ENCODE measurements at regions of chr12 and their contacts with region 1.

Region 1: GRCh38 chr12:77685112-77685511 is 145.6 kb upstream of the NAV3 start:
- DNase-seq: peak; percentile 80
- ATAC-seq: peak; percentile 92
- H3K4me3 ChIP-seq: no peak overlapping the region
- H3K27ac ChIP-seq: no peak overlapping the region
- H3K4me1 ChIP-seq: no peaks in the 10 kb centered on the region
- H3K27me3 ChIP-seq: no peaks in the 10 kb centered on the region; the same call in 1 of the 2 replicates
- CTCF ChIP-seq: peak; percentile 76

Region 2: DNA sequence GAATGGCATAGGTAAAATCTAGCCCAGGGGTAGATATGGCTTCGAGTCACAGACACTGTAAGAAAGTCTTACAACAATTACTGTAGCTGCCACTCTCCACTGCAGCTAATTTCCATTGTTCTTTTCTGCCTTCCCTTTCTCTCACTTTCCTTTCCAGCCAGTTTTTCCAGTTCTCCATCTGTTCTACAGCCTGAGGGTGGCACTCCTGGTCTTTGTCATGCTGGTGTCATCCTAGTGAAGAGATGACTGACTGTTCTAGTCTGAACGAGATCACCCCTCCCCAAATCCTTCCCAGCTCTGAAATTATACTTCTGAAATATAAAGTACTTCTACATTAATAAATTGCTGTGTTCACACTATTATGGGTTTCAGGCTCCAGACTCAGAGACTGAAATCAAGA is 732.1 kb before region 1 on chr12:
- CTCF ChIA-PET with region 1: no interaction called
- POLR2A ChIA-PET with region 1: no interaction called
- intact Hi-C with region 1: loop called (anchors 5 kb)
- DNase-seq: peak; percentile 89
- ATAC-seq: peak; percentile 96
- H3K4me3 ChIP-seq: no peak overlapping the region
- H3K27ac ChIP-seq: no peak overlapping the region
- H3K4me1 ChIP-seq: peaks cover 12% of the 10 kb centered on the region; the same call in 1 of the 2 replicates
- H3K27me3 ChIP-seq: no peaks in the 10 kb centered on the region
- CTCF ChIP-seq: peak; percentile 77

Region 3: DNA sequence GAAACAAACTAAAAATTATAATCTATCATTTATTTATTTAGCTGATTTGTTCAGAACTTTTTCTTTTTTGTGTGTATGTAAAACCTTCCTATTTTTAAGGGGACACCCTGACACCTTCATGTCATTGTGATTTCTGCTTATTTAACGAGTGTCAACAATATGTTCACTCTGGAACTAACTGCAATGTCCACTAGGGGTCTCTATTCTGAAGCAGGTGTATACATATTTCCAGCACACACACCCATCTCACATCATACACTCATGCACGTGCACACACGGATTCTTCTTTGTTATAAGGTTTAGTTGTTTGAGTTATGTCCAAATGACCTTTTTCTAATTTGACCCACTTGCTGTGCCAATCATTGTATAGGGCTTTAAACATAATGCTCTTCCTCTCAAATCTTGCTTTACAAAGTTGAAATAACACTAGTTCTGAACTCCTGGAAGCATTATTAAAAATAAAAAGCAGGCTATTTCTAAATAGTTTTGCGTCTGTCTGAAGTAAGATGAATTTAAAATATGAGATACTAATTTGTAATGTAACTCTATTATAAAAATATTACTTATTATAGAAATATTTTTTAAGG is 635.3 kb before region 1 on chr12:
- CTCF ChIA-PET with region 1: no interaction called
- POLR2A ChIA-PET with region 1: no interaction called
- intact Hi-C with region 1: loop called (anchors 1 kb)
- DNase-seq: peak; percentile 83
- ATAC-seq: peak; percentile 95
- H3K4me3 ChIP-seq: no peak overlapping the region
- H3K27ac ChIP-seq: no peak overlapping the region
- H3K4me1 ChIP-seq: no peaks in the 10 kb centered on the region
- H3K27me3 ChIP-seq: no peaks in the 10 kb centered on the region
- CTCF ChIP-seq: peak; percentile 89

Region 4: GRCh38 chr12:77274926-77275325 is 410.2 kb before region 1 on chr12:
- CTCF ChIA-PET with region 1: no interaction called
- POLR2A ChIA-PET with region 1: no interaction called
- intact Hi-C with region 1: loop called (anchors 10 kb)
- DNase-seq: no peak
- ATAC-seq: no peak
- H3K4me3 ChIP-seq: no peak overlapping the region
- H3K27ac ChIP-seq: no peak overlapping the region
- H3K4me1 ChIP-seq: no peaks in the 10 kb centered on the region
- H3K27me3 ChIP-seq: peaks cover 18% of the 10 kb centered on the region; the same call in 1 of the 2 replicates
- CTCF ChIP-seq: no peak

Region 5: GRCh38 chr12:77615331-77615730 is 69.8 kb before region 1 on chr12:
- CTCF ChIA-PET with region 1: no interaction called
- POLR2A ChIA-PET with region 1: no interaction called
- intact Hi-C with region 1: loop called (anchors 2 kb)
- DNase-seq: peak; percentile 33
- ATAC-seq: no peak
- H3K4me3 ChIP-seq: no peak overlapping the region
- H3K27ac ChIP-seq: no peak overlapping the region
- H3K4me1 ChIP-seq: no peaks in the 10 kb centered on the region
- H3K27me3 ChIP-seq: peaks cover 12% of the 10 kb centered on the region; the same call in 1 of the 2 replicates
- CTCF ChIP-seq: peak; percentile 47; the same call in 1 of the 2 replicates

Measured in PC-3 (cell line).